ENCODE measurements at regions of chr7 and their contacts with region 1.

Region 1: DNA sequence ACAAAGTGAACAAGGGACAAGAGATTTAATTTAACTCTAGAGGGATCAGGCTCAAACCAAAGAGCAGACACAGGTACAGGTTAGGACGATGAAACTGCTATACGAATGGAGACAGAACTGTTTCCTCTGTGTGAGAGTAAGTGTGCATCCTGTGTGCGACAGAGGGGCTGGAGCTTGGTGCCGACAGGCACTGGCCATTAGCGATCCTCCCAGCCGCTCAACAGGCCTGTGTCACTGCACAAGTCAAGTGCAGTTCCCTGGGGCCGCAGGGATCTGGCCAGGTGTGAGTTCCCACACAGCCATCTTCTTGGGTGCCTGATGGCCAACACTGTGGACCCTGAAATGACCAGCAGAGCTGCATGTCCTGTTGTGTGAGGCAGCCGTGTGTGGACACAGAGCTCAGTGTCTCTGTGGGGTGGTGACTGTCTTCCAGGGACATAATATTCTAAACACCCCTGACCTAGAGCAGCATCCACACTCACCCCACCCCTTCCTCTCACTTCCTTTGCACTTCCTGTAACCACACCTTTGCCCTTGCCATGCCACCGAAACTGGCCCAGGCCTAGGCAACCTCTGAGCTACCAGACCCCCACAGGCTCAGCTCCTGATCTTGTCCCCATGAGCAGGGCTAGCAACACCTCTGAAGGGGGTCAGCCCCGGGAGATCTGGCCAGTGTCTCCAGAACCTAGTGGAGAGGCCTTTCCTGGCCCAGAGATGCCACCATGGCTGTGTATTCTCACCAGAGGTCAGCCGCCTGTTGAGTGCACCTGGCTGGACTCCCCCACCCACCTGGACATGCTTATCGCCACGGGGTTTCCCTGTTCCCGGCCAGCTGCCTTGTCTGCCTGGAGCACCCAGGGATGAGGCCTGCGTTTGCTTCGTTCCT is 11.7 kb upstream of the TBRG4 start:
- DNase-seq: no peak
- H3K4me3 ChIP-seq: no peak overlapping the region
- H3K27ac ChIP-seq: no peak overlapping the region
- H3K4me1 ChIP-seq: no peaks in the 10 kb centered on the region
- H3K27me3 ChIP-seq: peaks cover 0 to 10% (median 0%) of the 10 kb centered on the region in 4 donors
- CTCF ChIP-seq: no peak
- EP300 ChIP-seq: no peak
- POLR2A ChIP-seq: no peak

Region 2: DNA sequence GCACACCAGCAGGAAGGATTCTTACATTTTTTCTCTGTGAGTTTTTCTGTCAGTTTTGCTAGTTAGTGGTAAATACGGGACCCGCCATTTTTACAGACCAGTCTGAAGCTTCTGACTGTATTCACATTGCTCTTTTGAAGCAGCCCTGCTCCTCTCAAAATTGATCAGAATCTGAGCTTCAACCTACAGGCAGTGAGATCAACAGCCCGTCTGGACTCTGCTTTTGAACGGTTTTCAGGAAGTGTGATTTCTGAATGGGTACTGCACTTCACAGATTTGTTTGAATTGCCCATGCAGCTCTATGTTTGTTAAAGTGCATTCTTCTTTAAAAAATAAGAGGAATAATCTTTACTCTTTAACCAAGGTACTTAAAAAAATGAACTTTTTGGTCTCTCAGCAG is 246.8 kb before region 1 on chr7:
- intact Hi-C with region 1: loop called (anchors 10 kb)
- DNase-seq: no peak
- H3K4me3 ChIP-seq: no peak overlapping the region
- H3K27ac ChIP-seq: no peak overlapping the region
- H3K4me1 ChIP-seq: peaks cover 24 to 42% (median 38%) of the 10 kb centered on the region in 4 donors
- H3K27me3 ChIP-seq: no peaks in the 10 kb centered on the region
- CTCF ChIP-seq: no peak
- EP300 ChIP-seq: no peak
- POLR2A ChIP-seq: no peak

Measured in esophagus muscularis mucosa (tissue), 4 donors.